Activated CD4-positive, alpha-beta memory T cell treated with anti-CD3 and anti-CD28 coated beads for 36 hours (primary cell): ENCODE measurements at regions of chr19 and their contacts with region 1.

Region 1: DNA sequence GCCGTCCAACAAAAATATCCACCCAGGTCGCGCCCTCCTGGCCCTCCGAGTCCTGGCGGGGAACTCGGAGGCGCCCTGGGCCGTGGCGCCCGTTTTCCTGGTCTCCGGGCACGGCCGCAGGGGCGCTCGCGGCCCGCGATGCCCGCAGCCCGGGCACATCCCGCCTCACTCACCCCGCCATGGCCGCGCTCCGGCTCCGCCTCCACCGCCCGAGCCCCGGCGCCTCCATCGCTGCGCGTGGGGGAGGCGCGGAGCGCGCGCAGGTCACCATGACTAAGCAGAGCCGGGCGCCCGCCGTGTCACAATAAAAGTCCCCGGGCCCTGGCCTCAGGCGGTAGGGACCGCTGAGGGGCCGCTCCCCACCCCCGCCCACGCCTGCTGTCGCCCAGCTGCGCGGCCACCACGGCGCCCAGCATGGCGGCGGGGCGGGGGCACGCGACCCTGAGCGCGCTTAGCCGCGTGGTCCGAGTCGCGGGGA is 593 bp downstream of the KEAP1 start:
- DNase-seq: peak; percentile 94
- H3K4me3 Mint-ChIP-seq: peak overlapping the region; percentile 90
- H3K27ac Mint-ChIP-seq: peak overlapping the region; percentile 84
- H3K4me1 Mint-ChIP-seq: peaks cover 35% of the 10 kb centered on the region
- H3K27me3 Mint-ChIP-seq: no peaks in the 10 kb centered on the region

Region 2: DNA sequence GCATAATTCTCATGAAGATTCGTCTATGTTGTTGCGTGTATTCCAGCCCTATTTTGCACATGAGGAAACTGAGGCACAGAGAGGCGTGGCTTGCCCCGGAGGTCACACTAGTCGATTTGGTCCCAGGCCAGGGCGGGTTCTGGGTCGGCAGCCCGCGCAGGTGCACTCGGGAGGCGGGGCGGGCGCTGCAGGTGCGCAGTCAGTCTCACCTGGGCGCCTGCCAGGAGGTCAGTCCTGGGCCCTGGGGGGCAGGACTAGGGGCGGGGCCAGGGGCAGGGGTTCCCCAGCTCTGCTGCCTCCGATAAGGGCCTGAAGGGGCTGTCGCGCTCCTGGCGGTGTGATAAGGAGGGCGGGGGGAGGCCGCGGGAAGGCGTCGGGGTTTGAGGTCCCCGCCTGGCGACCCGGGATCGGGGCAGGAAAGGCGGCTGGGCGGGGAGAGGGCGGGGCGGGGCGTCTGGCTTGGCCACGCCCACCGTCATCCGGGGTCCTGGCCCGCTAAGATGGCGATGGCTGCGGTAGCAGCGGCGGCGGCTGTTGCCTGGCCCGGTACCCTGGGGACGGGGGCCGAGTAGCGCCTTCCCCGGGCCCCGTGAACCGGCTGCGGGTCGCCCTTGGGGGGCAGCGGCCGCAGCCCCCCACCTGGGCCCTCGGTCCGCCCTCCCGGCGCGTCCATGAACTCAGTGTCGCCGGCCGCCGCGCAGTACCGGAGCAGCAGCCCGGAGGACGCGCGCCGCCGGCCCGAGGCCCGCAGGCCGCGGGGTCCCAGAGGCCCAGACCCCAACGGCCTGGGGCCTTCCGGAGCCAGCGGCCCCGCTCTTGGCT is 41.1 kb after region 1 on chr19 and contains the start of gene ATG4D:
- CTCF ChIA-PET with region 1: interaction called, 3 read pairs
- POLR2A ChIA-PET with region 1: interaction called, 4 read pairs
- intact Hi-C with region 1: loop called (anchors 5 kb)
- DNase-seq: peak; percentile 85
- H3K4me3 Mint-ChIP-seq: peak within 1 kb of the TSS; percentile 88
- H3K27ac Mint-ChIP-seq: peak within 1 kb of the TSS; percentile 84
- H3K4me1 Mint-ChIP-seq: peaks cover 14% of the 10 kb centered on the region
- H3K27me3 Mint-ChIP-seq: peaks cover 8% of the 10 kb centered on the region
- total RNA-seq, gene ATG4D: 23.8 to 26.7 TPM

Region 3: GRCh38 chr19:10551698-10552301 is 49.2 kb after region 1 on chr19:
- CTCF ChIA-PET with region 1: interaction called, 10 read pairs
- POLR2A ChIA-PET with region 1: interaction called, 3 read pairs
- intact Hi-C with region 1: no loop called
- DNase-seq: peak; percentile 67
- H3K4me3 Mint-ChIP-seq: no peak overlapping the region
- H3K27ac Mint-ChIP-seq: no peak overlapping the region
- H3K4me1 Mint-ChIP-seq: peaks cover 33% of the 10 kb centered on the region
- H3K27me3 Mint-ChIP-seq: no peaks in the 10 kb centered on the region